Sciatic nerve (tissue), 2 donors: ENCODE measurements at regions of chr19 and their contacts with region 1.

Region 1: GRCh38 chr19:52397310-52398080 is at the start of gene ZNF528:
- DNase-seq: peak; percentile 98
- ATAC-seq: peak; percentile 100
- total RNA-seq, gene ZNF528: 42.8 TPM

Region 2: DNA sequence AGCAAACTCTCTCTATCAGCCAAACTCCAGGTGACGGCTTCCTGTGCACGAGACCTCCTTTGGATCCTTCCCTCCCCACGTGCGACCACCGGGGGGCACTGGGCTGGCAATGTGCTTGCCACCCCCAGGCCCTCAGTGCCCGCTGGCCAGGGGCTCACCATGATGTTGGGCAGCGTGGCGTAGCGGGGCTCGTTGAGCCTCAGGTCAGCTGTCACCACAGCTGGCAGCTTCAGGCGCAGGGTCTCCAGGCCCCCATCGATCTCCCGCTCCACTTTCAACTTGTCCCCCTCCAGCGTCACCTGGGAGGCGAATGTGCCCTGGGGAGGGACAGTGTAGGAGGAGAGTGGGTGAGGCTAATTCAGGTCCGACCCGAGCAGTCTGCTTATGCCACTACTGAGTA is 1050.8 kb before region 1 on chr19:
- intact Hi-C with region 1: loop called (anchors 5 kb)
- DNase-seq: no peak
- ATAC-seq: no peak

Region 3: DNA sequence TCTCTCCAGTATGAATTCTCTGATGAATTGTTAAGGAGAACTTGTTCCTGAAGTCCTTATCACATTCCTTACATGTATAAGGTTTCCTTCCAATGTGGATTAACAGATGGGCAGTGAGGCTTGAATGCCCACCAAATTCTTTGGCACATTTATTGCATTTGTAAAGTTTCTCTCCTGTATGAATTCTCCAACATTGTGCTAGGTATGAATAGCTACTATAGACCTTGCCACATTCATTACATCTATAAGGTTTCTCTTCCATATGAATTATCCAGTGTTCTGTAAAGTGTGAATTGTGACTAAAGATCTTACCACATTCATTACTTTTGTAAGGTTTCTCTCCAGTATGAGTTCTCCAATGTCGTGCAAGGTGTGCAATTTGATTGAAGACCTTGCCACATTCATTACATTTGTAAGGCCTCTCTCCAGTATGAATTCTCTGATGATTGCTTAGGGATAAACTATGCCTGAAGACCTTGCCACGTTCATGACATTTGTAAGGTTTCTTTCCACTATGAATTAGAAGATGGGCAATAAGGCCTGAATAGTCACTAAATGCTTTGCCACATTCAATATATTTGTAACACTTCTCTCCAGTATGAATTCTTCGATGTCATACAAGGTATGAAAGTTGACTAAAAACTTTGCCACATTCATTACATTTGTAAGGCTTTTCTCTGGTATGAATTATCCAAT is 76.3 kb after region 1 on chr19:
- intact Hi-C with region 1: no loop called
- DNase-seq: no peak
- ATAC-seq: no peak